CD8-positive, alpha-beta memory T cell (primary cell): ENCODE measurements at regions of chr10 and their contacts with region 1.

Region 1: DNA sequence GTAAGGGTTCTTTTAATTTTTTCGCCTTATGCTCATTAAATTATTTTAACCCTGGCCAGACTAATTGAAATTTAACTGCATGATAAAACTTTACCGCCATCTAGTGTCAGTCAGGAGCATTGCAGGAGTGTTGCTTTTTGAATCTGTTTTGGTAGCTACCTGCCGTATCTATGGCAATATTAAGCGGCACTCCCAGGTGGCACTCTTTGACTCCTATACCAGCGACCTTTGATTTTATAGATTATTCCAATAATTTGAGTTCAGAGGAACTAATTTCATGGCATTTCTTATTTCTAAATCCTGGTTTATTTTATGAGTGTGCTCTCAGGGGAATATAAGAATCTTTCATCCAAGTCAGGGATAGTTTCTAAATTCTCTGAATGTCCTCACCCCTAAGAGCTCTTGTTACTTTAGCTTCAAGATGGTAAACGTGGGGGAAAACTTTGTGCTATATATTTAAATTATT is 198.9 kb downstream of the REEP3 start:
- DNase-seq: peak in 4 of 5 donors; percentile 21 to 61 (median 52)
- H3K4me3 ChIP-seq: no peak overlapping the region
- H3K4me3 Mint-ChIP-seq: peak overlapping the region in 4 of 7 donors; percentile 13 to 39 (median 27)
- H3K27ac ChIP-seq: no peak overlapping the region
- H3K27ac Mint-ChIP-seq: peak overlapping the region in 3 of 8 donors; percentile 17 to 82 (median 64)
- H3K4me1 ChIP-seq: peaks cover 4% of the 10 kb centered on the region
- H3K4me1 Mint-ChIP-seq: peaks cover 7 to 12% (median 11%) of the 10 kb centered on the region in 3 donors
- H3K27me3 ChIP-seq: no peaks in the 10 kb centered on the region
- H3K27me3 Mint-ChIP-seq: peaks cover 5 to 10% of the 10 kb centered on the region in 2 donors

Region 2: DNA sequence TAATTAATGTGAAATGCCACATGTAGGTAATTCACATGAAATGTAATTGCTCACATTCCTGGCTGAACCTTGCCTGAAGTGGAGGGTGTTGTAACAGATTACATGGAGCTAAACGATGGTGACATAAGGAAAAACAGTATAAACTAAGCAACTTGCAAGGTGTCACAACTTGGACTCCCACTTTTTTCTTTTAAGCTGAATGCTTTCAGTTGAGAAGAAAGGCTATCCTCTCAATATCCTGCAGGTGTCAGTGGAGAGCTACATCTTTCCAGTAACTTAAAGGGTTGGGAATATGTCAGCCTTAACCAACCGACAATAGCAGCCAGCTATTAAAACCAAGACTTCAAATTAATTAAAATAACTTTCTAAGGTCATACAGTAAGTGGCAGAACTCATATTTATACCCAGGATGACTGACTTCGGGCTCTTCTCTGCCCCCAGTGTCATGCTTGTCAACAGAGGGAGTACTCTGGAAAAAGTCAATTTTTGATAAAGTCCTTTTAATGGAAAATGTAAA is 553.3 kb before region 1 on chr10:
- CTCF ChIA-PET with region 1: interaction called, 154 read pairs
- POLR2A ChIA-PET with region 1: no interaction called
- DNase-seq: peak in 2 of 5 donors; percentile 36 to 48
- H3K4me3 ChIP-seq: no peak overlapping the region
- H3K4me3 Mint-ChIP-seq: no peak overlapping the region
- H3K27ac ChIP-seq: no peak overlapping the region
- H3K27ac Mint-ChIP-seq: peak overlapping the region in 3 of 8 donors; percentile 16 to 60 (median 26)
- H3K4me1 ChIP-seq: no peaks in the 10 kb centered on the region
- H3K4me1 Mint-ChIP-seq: peaks cover 1 to 7% (median 2%) of the 10 kb centered on the region in 3 donors
- H3K27me3 ChIP-seq: no peaks in the 10 kb centered on the region
- H3K27me3 Mint-ChIP-seq: peaks cover 0 to 2% of the 10 kb centered on the region in 2 donors

Region 3: GRCh38 chr10:63217120-63217605 is 502.9 kb before region 1 on chr10:
- CTCF ChIA-PET with region 1: interaction called, 22 read pairs
- POLR2A ChIA-PET with region 1: no interaction called
- DNase-seq: peak in 2 of 5 donors; percentile 48 to 58
- H3K4me3 ChIP-seq: no peak overlapping the region
- H3K4me3 Mint-ChIP-seq: peak overlapping the region in 1 of 7 donors; percentile 5
- H3K27ac ChIP-seq: no peak overlapping the region
- H3K27ac Mint-ChIP-seq: peak overlapping the region in 6 of 8 donors; percentile 1 to 85 (median 48)
- H3K4me1 ChIP-seq: peaks cover 27% of the 10 kb centered on the region
- H3K4me1 Mint-ChIP-seq: peaks cover 52 to 61% (median 56%) of the 10 kb centered on the region in 3 donors
- H3K27me3 ChIP-seq: no peaks in the 10 kb centered on the region
- H3K27me3 Mint-ChIP-seq: peaks cover 0 to 2% of the 10 kb centered on the region in 2 donors

Region 4: GRCh38 chr10:63407136-63407662 is 312.9 kb before region 1 on chr10:
- CTCF ChIA-PET with region 1: no interaction called
- POLR2A ChIA-PET with region 1: no interaction called
- DNase-seq: no peak
- H3K4me3 ChIP-seq: no peak overlapping the region
- H3K4me3 Mint-ChIP-seq: no peak overlapping the region
- H3K27ac ChIP-seq: no peak overlapping the region
- H3K27ac Mint-ChIP-seq: peak overlapping the region in 2 of 8 donors; percentile 16 to 29
- H3K4me1 ChIP-seq: no peaks in the 10 kb centered on the region
- H3K4me1 Mint-ChIP-seq: peaks cover 15 to 45% (median 32%) of the 10 kb centered on the region in 3 donors
- H3K27me3 ChIP-seq: no peaks in the 10 kb centered on the region
- H3K27me3 Mint-ChIP-seq: no peaks in the 10 kb centered on the region

Region 5: GRCh38 chr10:63806330-63806729 is 86.2 kb after region 1 on chr10:
- CTCF ChIA-PET with region 1: no interaction called
- POLR2A ChIA-PET with region 1: no interaction called
- DNase-seq: no peak
- H3K4me3 ChIP-seq: no peak overlapping the region
- H3K4me3 Mint-ChIP-seq: no peak overlapping the region
- H3K27ac ChIP-seq: no peak overlapping the region
- H3K27ac Mint-ChIP-seq: no peak overlapping the region
- H3K4me1 ChIP-seq: no peaks in the 10 kb centered on the region
- H3K4me1 Mint-ChIP-seq: no peaks in the 10 kb centered on the region
- H3K27me3 ChIP-seq: no peaks in the 10 kb centered on the region
- H3K27me3 Mint-ChIP-seq: peaks cover 3 to 5% of the 10 kb centered on the region in 2 donors